ENCODE measurements at regions of chr17 and their contacts with region 1.

Region 1: GRCh38 chr17:2853111-2853721 is 57.0 kb downstream of the RAP1GAP2 start:
- DNase-seq: peak; percentile 54
- ATAC-seq: peak; percentile 29
- H3K4me3 ChIP-seq: peak overlapping the region in 3 of 5 experiments; percentile 52 to 55 (median 54)
- H3K4me3 Mint-ChIP-seq: peak overlapping the region; percentile 77
- H3K27ac ChIP-seq: no peak overlapping the region
- H3K27ac Mint-ChIP-seq: no peak overlapping the region
- H3K4me1 ChIP-seq: peaks cover 22 to 32% of the 10 kb centered on the region in 2 donors
- H3K4me1 Mint-ChIP-seq: peaks cover 23% of the 10 kb centered on the region
- H3K27me3 ChIP-seq: peaks cover 0 to 64% (median 32%) of the 10 kb centered on the region in 4 experiments
- H3K27me3 Mint-ChIP-seq: peaks cover 38% of the 10 kb centered on the region
- CTCF ChIP-seq: no peak

Region 2: GRCh38 chr17:1839516-1839915 is 1013.7 kb before region 1 on chr17:
- CTCF ChIA-PET with region 1: no interaction called
- POLR2A ChIA-PET with region 1: interaction called, 10 read pairs
- intact Hi-C with region 1: no loop called
- DNase-seq: no peak
- ATAC-seq: no peak
- H3K4me3 ChIP-seq: no peak overlapping the region
- H3K4me3 Mint-ChIP-seq: no peak overlapping the region
- H3K27ac ChIP-seq: no peak overlapping the region
- H3K27ac Mint-ChIP-seq: no peak overlapping the region
- H3K4me1 ChIP-seq: peaks cover 0 to 7% of the 10 kb centered on the region in 2 donors
- H3K4me1 Mint-ChIP-seq: peaks cover 13% of the 10 kb centered on the region
- H3K27me3 ChIP-seq: no peaks in the 10 kb centered on the region
- H3K27me3 Mint-ChIP-seq: no peaks in the 10 kb centered on the region
- CTCF ChIP-seq: no peak

Region 3: GRCh38 chr17:1931759-1932579 is 921.2 kb before region 1 on chr17:
- CTCF ChIA-PET with region 1: no interaction called
- POLR2A ChIA-PET with region 1: no interaction called
- intact Hi-C with region 1: no loop called
- DNase-seq: no peak
- ATAC-seq: no peak
- H3K4me3 ChIP-seq: no peak overlapping the region
- H3K4me3 Mint-ChIP-seq: no peak overlapping the region
- H3K27ac ChIP-seq: no peak overlapping the region
- H3K27ac Mint-ChIP-seq: no peak overlapping the region
- H3K4me1 ChIP-seq: no peaks in the 10 kb centered on the region
- H3K4me1 Mint-ChIP-seq: no peaks in the 10 kb centered on the region
- H3K27me3 ChIP-seq: peaks cover 0 to 4% (median 0%) of the 10 kb centered on the region in 4 experiments
- H3K27me3 Mint-ChIP-seq: peaks cover 5% of the 10 kb centered on the region
- CTCF ChIP-seq: no peak

Region 4: DNA sequence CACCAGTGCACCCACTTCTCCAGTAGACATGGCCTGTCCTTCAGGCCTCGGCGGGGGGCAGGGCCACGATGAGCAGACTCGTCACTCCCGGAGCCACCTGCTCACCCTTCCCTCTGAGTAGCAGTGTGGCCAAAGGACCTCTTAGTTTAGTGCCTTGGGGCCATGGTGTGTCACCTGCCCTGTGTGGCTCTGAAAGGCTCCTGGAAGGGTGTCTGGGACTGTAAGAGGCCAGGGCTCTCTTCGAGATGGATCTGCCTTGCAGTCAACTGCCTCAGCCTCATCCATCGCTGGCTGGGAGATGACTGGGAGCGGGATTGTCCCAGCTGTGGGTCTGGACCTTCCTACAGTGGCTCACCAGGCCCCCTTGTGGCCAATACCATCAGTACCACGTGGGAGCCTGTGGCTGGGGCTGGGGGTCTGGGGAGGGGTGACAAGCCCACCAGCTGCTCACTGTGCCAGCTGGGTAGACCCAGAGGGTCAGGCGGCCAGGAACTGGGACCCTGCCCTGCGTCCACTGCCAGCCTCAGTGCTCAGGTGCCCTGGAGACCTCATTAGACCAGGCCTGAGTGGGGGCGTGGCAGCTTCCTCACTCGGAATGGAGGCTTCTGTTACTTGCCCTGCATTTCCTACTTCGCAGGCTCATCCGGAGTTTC is 76.8 kb after region 1 on chr17:
- CTCF ChIA-PET with region 1: interaction called, 21 read pairs
- POLR2A ChIA-PET with region 1: no interaction called
- intact Hi-C with region 1: loop called (anchors 5 kb)
- DNase-seq: peak; percentile 47
- ATAC-seq: peak; percentile 34
- H3K4me3 ChIP-seq: no peak overlapping the region
- H3K4me3 Mint-ChIP-seq: no peak overlapping the region
- H3K27ac ChIP-seq: no peak overlapping the region
- H3K27ac Mint-ChIP-seq: no peak overlapping the region
- H3K4me1 ChIP-seq: peaks cover 24 to 28% of the 10 kb centered on the region in 2 donors
- H3K4me1 Mint-ChIP-seq: peaks cover 28% of the 10 kb centered on the region
- H3K27me3 ChIP-seq: peaks cover 0 to 4% (median 1%) of the 10 kb centered on the region in 4 experiments
- H3K27me3 Mint-ChIP-seq: peaks cover 5% of the 10 kb centered on the region
- CTCF ChIP-seq: peak; percentile 75

Measured in B cell (primary cell).